Heart right ventricle (tissue), 16 donors: ENCODE measurements at regions of chr5 and their contacts with region 1.

Region 1: GRCh38 chr5:16539169-16539721 is 73.6 kb upstream of the ZNF622 start:
- DNase-seq: peak; percentile 73 to 75
- ATAC-seq: peak; percentile 85 to 96 (median 92)
- H3K4me3 ChIP-seq: no peak overlapping the region
- H3K27ac ChIP-seq: peak overlapping the region; percentile 51 to 94 (median 88)
- H3K4me1 ChIP-seq: peaks cover 3 to 57% (median 33%) of the 10 kb centered on the region in 9 donors
- H3K27me3 ChIP-seq: no peaks in the 10 kb centered on the region
- CTCF ChIP-seq: no peak

Region 2: GRCh38 chr5:16427587-16427986 is 111.7 kb before region 1 on chr5:
- intact Hi-C with region 1: no loop called
- DNase-seq: no peak
- ATAC-seq: no peak
- H3K4me3 ChIP-seq: no peak overlapping the region
- H3K27ac ChIP-seq: no peak overlapping the region
- H3K4me1 ChIP-seq: peaks cover 0 to 7% (median 0%) of the 10 kb centered on the region in 9 donors
- H3K27me3 ChIP-seq: peaks cover 0 to 4% (median 0%) of the 10 kb centered on the region in 7 donors
- CTCF ChIP-seq: no peak

Region 3: DNA sequence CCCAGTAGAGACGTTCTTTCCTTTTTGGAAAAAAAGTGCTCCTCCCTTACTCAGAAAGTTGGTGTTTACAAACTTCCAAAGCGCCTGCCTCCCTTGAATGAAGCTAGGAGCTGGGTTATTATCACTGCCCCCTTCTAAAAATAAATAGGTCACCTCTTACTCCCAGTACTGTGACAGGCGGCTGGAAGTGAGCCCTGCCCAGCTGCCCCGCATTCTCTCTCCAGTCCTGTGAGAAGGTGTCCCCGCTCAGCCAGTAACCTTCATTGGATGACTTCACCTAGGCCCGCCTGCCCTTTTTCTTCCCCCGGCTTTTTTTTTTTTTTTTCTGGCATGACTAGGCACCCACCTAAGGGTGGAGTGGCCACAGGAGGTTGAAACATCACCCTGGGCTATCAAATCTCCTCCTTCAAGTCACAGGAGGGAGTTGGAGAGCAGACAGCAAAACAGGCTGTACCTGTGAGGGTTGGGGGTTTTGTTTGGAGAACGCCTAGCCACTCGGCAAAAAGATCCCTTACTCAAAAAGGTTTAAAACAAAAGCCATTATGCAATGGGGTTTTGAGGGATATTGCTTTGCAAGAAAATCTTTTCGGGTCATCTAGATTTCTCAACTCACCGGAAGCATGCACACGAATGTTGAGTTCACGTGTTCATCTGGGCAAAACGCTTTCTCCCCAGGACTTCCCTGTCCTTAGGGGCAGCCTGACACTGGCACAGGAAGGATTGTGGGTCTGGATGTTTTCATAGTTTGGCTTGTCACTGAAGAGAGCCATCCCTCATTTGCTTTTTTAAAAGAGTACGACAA is 30.3 kb before region 1 on chr5:
- intact Hi-C with region 1: loop called in 1 of 10 experiments (anchors 5 kb)
- DNase-seq: peak; percentile 74 to 75
- ATAC-seq: peak; percentile 84 to 95 (median 94)
- H3K4me3 ChIP-seq: peak overlapping the region; percentile 4 to 60 (median 48)
- H3K27ac ChIP-seq: peak overlapping the region; percentile 57 to 96 (median 88)
- H3K4me1 ChIP-seq: peaks cover 0 to 25% (median 7%) of the 10 kb centered on the region in 9 donors
- H3K27me3 ChIP-seq: no peaks in the 10 kb centered on the region
- CTCF ChIP-seq: no peak